K562 (cell line): ENCODE measurements at regions of chr6 and their contacts with region 1.

Region 1: GRCh38 chr6:28136585-28137504 is 4.8 kb upstream of the ZKSCAN8 start:
- DNase-seq: peak; percentile 84 to 99 (median 88)
- ATAC-seq: peak; percentile 80
- H3K4me3 ChIP-seq: peak overlapping the region; percentile 72
- H3K27ac ChIP-seq: peak overlapping the region; percentile 96
- H3K4me1 ChIP-seq: peaks cover 12 to 20% of the 10 kb centered on the region in 2 experiments; a peak in 4 of 5 replicates
- H3K27me3 ChIP-seq: no peaks in the 10 kb centered on the region
- CTCF ChIP-seq: no peak
- EP300 ChIP-seq: peak; percentile 91
- POLR2A ChIP-seq: peak; percentile 93
- RAD21 ChIP-seq: peak; percentile 38 to 48; a peak in 3 of 4 replicates

Region 2: DNA sequence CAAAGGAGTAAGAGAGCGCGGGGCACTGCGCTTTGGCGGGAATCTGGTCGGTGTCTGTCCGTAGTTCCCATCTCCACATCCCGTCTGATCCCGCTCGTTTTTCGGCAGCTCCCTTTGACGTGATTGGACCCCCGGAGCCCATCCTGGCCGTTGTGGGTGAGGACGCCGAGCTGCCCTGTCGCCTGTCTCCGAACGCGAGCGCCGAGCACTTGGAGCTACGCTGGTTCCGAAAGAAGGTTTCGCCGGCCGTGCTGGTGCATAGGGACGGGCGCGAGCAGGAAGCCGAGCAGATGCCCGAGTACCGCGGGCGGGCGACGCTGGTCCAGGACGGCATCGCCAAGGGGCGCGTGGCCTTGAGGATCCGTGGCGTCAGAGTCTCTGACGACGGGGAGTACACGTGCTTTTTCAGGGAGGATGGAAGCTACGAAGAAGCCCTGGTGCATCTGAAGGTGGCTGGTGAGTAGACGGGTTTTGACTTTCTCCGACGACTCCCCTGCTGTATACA is 1635.3 kb before region 1 on chr6:
- CTCF ChIA-PET with region 1: no interaction called
- POLR2A ChIA-PET with region 1: no interaction called
- in situ Hi-C with region 1: no loop called
- intact Hi-C with region 1: no loop called
- DNase-seq: no peak
- ATAC-seq: no peak
- H3K4me3 ChIP-seq: no peak overlapping the region
- H3K27ac ChIP-seq: no peak overlapping the region
- H3K4me1 ChIP-seq: peaks cover 10 to 19% of the 10 kb centered on the region in 2 experiments
- H3K27me3 ChIP-seq: no peaks in the 10 kb centered on the region
- CTCF ChIP-seq: no peak
- EP300 ChIP-seq: no peak
- POLR2A ChIP-seq: no peak
- RAD21 ChIP-seq: no peak

Region 3: DNA sequence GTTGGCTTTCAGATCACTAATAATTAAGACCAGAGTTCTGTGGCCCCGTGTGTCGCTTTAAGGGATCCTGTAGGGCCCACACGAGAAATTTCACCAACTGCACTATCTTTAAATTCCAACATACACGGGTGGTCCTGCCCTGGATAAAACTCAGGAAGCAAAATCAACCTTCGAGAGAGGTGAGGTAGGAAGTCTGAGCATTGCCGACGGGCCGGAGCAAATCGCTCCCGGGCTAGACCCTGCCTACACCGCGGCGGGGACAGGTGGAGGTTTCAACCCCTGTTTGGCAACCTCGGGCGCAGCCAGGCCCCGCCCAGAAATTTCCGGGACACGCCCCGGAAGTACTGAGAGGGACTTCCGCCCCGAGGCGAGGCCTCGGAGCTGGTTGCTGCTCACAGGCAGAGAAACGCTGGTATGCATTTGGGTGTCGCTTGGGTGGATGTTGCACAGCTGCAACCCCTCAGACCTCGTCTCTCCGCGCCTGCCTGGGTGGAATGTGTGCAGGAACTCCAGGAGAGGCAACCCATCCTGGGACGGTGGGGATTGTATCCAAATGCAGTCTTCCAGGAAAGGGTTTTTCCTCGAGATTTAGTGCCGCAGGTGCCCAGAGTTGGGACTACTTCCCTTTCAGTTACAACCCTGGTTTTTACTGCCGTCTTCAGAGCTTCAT is 24.7 kb after region 1 on chr6:
- CTCF ChIA-PET with region 1: no interaction called
- POLR2A ChIA-PET with region 1: interaction called, 12 read pairs
- in situ Hi-C with region 1: no loop called
- intact Hi-C with region 1: no loop called
- DNase-seq: peak; percentile 89 to 95 (median 92)
- ATAC-seq: peak; percentile 98
- H3K4me3 ChIP-seq: peak overlapping the region; percentile 43
- H3K27ac ChIP-seq: peak overlapping the region; percentile 34
- H3K4me1 ChIP-seq: peaks cover 5 to 8% of the 10 kb centered on the region in 2 experiments
- H3K27me3 ChIP-seq: no peaks in the 10 kb centered on the region
- CTCF ChIP-seq: no peak
- EP300 ChIP-seq: no peak
- POLR2A ChIP-seq: peak; percentile 92
- RAD21 ChIP-seq: no peak

Region 4: GRCh38 chr6:28218271-28219248 is 81.7 kb after region 1 on chr6:
- CTCF ChIA-PET with region 1: no interaction called
- POLR2A ChIA-PET with region 1: interaction called, 15 read pairs
- in situ Hi-C with region 1: no loop called
- intact Hi-C with region 1: loop called (anchors 2 kb)
- DNase-seq: peak; percentile 89 to 95 (median 92)
- ATAC-seq: peak; percentile 84
- H3K4me3 ChIP-seq: peak overlapping the region; percentile 62
- H3K27ac ChIP-seq: peak overlapping the region; percentile 81
- H3K4me1 ChIP-seq: peaks cover 33 to 44% of the 10 kb centered on the region in 2 experiments
- H3K27me3 ChIP-seq: no peaks in the 10 kb centered on the region
- CTCF ChIP-seq: peak in 2 of 3 experiments; percentile 13 to 32; a peak in 1 of 6 replicates
- EP300 ChIP-seq: peak; percentile 36; the same call in 1 of the 2 replicates
- POLR2A ChIP-seq: peak; percentile 82
- RAD21 ChIP-seq: no peak; a peak in 1 of 4 replicates

Region 5: GRCh38 chr6:28252009-28252975 is 115.4 kb after region 1 on chr6 and contains the start of gene ZKSCAN4:
- CTCF ChIA-PET with region 1: no interaction called
- POLR2A ChIA-PET with region 1: interaction called, 8 read pairs
- in situ Hi-C with region 1: no loop called
- intact Hi-C with region 1: loop called (anchors 1 kb)
- DNase-seq: peak; percentile 82 to 96 (median 88)
- ATAC-seq: peak; percentile 94
- H3K4me3 ChIP-seq: peak within 1 kb of the TSS; percentile 73
- H3K27ac ChIP-seq: peak within 1 kb of the TSS; percentile 60
- H3K4me1 ChIP-seq: peaks cover 10 to 24% of the 10 kb centered on the region in 2 experiments
- H3K27me3 ChIP-seq: no peaks in the 10 kb centered on the region
- CTCF ChIP-seq: no peak
- EP300 ChIP-seq: peak; percentile 62
- POLR2A ChIP-seq: peak; percentile 75
- RAD21 ChIP-seq: peak; percentile 35 to 38
- polyA plus RNA-seq, gene ZKSCAN4: 1.2 to 1.6 TPM

Region 6: GRCh38 chr6:28355743-28356665 is 219.2 kb after region 1 on chr6:
- CTCF ChIA-PET with region 1: interaction called, 12 read pairs
- POLR2A ChIA-PET with region 1: interaction called, 12 read pairs
- in situ Hi-C with region 1: loop called (anchors 5 kb)
- intact Hi-C with region 1: loop called (anchors 1 kb)
- DNase-seq: peak; percentile 73 to 94 (median 75)
- ATAC-seq: peak; percentile 80
- H3K4me3 ChIP-seq: peak overlapping the region; percentile 42
- H3K27ac ChIP-seq: peak overlapping the region; percentile 76
- H3K4me1 ChIP-seq: peaks cover 44 to 49% of the 10 kb centered on the region in 2 experiments
- H3K27me3 ChIP-seq: no peaks in the 10 kb centered on the region; a peak in 1 of 5 replicates
- CTCF ChIP-seq: peak; percentile 79 to 95 (median 84)
- EP300 ChIP-seq: peak; percentile 57; the same call in 1 of the 2 replicates
- POLR2A ChIP-seq: no peak
- RAD21 ChIP-seq: peak; percentile 91 to 94